Naive thymus-derived CD4-positive, alpha-beta T cell (primary cell): ENCODE measurements at regions of chr13 and their contacts with region 1.

Region 1: GRCh38 chr13:39037880-39038568 is at the starts of genes NHLRC3 and PROSER1:
- DNase-seq: peak; percentile 60 to 86 (median 78)
- ATAC-seq: peak; percentile 87
- H3K4me3 ChIP-seq: peak within 1 kb of the TSS; percentile 95
- H3K4me3 Mint-ChIP-seq: peak within 1 kb of the TSS; percentile 92 to 99 (median 96)
- H3K27ac ChIP-seq: peak within 1 kb of the TSS; percentile 82
- H3K27ac Mint-ChIP-seq: peak within 1 kb of the TSS; percentile 92 to 97 (median 95)
- H3K4me1 ChIP-seq: peaks cover 7 to 28% of the 10 kb centered on the region in 2 donors
- H3K4me1 Mint-ChIP-seq: peaks cover 36 to 78% (median 65%) of the 10 kb centered on the region in 7 donors
- H3K27me3 ChIP-seq: no peaks in the 10 kb centered on the region
- H3K27me3 Mint-ChIP-seq: no peaks in the 10 kb centered on the region
- total RNA-seq, gene NHLRC3: 13.0 to 30.6 (median 23.6) TPM
- total RNA-seq, gene PROSER1: 36.1 to 65.7 (median 47.3) TPM

Region 2: DNA sequence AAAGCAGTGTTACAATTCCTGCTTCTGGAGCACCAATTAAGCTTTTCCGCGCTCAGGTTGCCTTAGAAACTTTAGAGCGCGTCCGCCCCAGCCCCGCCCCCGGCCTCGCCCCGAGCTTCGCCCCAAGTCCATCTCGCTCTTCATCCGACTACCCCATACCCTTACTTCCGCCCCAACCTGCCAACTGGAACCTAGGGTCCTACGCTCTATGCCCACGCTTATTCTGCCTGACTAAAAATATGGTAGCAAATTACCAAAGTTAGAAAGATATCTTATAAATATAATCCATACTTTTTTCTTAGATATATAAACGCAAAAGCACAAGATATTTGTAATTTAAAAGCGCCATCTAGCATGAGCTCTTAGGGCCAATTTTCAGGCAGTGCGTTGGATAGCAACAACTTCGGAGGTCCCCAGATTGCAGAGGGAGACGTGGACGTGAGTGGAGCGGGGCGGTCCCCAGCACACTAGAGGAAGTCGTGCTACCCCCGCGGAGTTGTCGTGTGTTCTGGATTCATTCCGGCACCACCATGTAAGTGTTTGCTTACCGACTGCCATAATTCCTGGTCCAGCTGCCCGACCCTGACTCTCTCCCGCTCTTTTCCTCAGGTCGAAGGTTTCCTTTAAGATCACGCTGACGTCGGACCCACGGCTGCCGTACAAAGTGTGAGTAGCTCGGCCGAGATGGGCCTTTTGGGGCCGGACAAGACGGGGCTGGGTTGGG is 688.5 kb before region 1 on chr13 and contains the start of gene UFM1:
- CTCF ChIA-PET with region 1: no interaction called
- POLR2A ChIA-PET with region 1: interaction called, 9 read pairs
- intact Hi-C with region 1: loop called (anchors 1 kb)
- DNase-seq: peak; percentile 62 to 94 (median 88)
- ATAC-seq: peak; percentile 97
- H3K4me3 ChIP-seq: peak within 1 kb of the TSS; percentile 98
- H3K4me3 Mint-ChIP-seq: peak within 1 kb of the TSS; percentile 89 to 100 (median 97)
- H3K27ac ChIP-seq: peak within 1 kb of the TSS; percentile 89
- H3K27ac Mint-ChIP-seq: peak within 1 kb of the TSS; percentile 92 to 100 (median 97)
- H3K4me1 ChIP-seq: peaks cover 20% of the 10 kb centered on the region in 2 donors
- H3K4me1 Mint-ChIP-seq: peaks cover 23 to 52% (median 40%) of the 10 kb centered on the region in 7 donors
- H3K27me3 ChIP-seq: no peaks in the 10 kb centered on the region
- H3K27me3 Mint-ChIP-seq: peaks cover 0 to 1% (median 0%) of the 10 kb centered on the region in 5 donors
- total RNA-seq, gene UFM1: 57.5 to 75.5 (median 65.2) TPM

Region 3: GRCh38 chr13:38566519-38566918 is 471.5 kb before region 1 on chr13:
- CTCF ChIA-PET with region 1: no interaction called
- POLR2A ChIA-PET with region 1: no interaction called
- intact Hi-C with region 1: no loop called
- DNase-seq: no peak
- ATAC-seq: no peak
- H3K4me3 ChIP-seq: no peak overlapping the region
- H3K4me3 Mint-ChIP-seq: no peak overlapping the region
- H3K27ac ChIP-seq: no peak overlapping the region
- H3K27ac Mint-ChIP-seq: no peak overlapping the region
- H3K4me1 ChIP-seq: no peaks in the 10 kb centered on the region
- H3K4me1 Mint-ChIP-seq: no peaks in the 10 kb centered on the region
- H3K27me3 ChIP-seq: no peaks in the 10 kb centered on the region
- H3K27me3 Mint-ChIP-seq: peaks cover 0 to 30% (median 0%) of the 10 kb centered on the region in 5 donors

Region 4: GRCh38 chr13:39051157-39051556 is 13.1 kb after region 1 on chr13:
- CTCF ChIA-PET with region 1: interaction called, 3 read pairs
- POLR2A ChIA-PET with region 1: interaction called, 14 read pairs
- intact Hi-C with region 1: no loop called
- DNase-seq: peak in 5 of 9 donors; percentile 11 to 38 (median 22)
- ATAC-seq: peak; percentile 51
- H3K4me3 ChIP-seq: no peak overlapping the region
- H3K4me3 Mint-ChIP-seq: no peak overlapping the region
- H3K27ac ChIP-seq: no peak overlapping the region
- H3K27ac Mint-ChIP-seq: peak overlapping the region in 1 of 9 donors; percentile 20
- H3K4me1 ChIP-seq: no peaks in the 10 kb centered on the region
- H3K4me1 Mint-ChIP-seq: peaks cover 0 to 13% (median 7%) of the 10 kb centered on the region in 7 donors
- H3K27me3 ChIP-seq: no peaks in the 10 kb centered on the region
- H3K27me3 Mint-ChIP-seq: no peaks in the 10 kb centered on the region

Region 5: DNA sequence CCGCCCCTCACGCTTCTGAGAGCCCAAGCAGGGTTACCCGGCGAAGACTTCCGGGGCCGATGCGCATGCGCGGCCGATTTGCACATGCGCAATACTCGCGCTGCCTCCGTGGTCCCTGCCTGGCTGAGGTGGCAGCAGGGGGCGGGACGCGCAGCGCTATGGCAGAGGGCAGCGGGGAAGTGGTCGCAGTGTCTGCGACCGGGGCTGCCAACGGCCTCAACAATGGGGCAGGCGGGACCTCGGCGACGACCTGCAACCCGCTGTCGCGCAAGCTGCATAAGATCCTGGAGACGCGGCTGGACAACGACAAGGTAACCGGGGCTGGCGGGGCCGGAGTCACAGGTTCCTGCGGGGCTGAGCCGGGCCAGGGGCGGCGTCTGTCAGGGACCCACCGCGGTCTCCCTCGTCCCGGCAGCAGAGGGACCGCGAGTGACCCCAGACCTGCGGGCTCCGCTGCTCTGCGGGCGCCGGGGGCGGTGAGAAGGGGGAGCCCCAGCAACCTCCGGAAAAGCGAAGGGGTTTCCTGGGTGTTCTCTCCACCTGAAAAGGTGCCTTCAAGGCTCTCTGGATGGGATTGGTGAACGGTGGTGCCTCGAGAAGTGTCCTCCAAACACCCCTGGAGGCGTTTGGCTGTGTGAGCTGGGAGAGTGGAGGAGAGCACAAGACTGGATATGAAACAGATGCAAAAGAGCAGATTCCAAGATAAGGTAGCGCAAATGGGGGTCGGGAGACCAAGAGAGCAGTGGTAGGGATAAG is 617.7 kb after region 1 on chr13 and contains the start of gene COG6:
- CTCF ChIA-PET with region 1: interaction called, 3 read pairs
- POLR2A ChIA-PET with region 1: interaction called, 5 read pairs
- intact Hi-C with region 1: loop called (anchors 1 to 5 kb)
- DNase-seq: peak; percentile 88 to 99 (median 94)
- ATAC-seq: peak; percentile 93
- H3K4me3 ChIP-seq: peak within 1 kb of the TSS; percentile 79
- H3K4me3 Mint-ChIP-seq: peak within 1 kb of the TSS; percentile 89 to 100 (median 96)
- H3K27ac ChIP-seq: peak within 1 kb of the TSS; percentile 79
- H3K27ac Mint-ChIP-seq: peak within 1 kb of the TSS; percentile 79 to 97 (median 90)
- H3K4me1 ChIP-seq: peaks cover 4 to 5% of the 10 kb centered on the region in 2 donors
- H3K4me1 Mint-ChIP-seq: peaks cover 19 to 46% (median 43%) of the 10 kb centered on the region in 7 donors
- H3K27me3 ChIP-seq: no peaks in the 10 kb centered on the region
- H3K27me3 Mint-ChIP-seq: peaks cover 0 to 14% (median 4%) of the 10 kb centered on the region in 5 donors
- total RNA-seq, gene COG6: 19.4 to 41.6 (median 32.3) TPM